Activated CD4-positive, alpha-beta T cell treated with anti-CD3 and anti-CD28 coated beads for 36 hours (primary cell): ENCODE measurements at regions of chr4 and their contacts with region 1.

Region 1: DNA sequence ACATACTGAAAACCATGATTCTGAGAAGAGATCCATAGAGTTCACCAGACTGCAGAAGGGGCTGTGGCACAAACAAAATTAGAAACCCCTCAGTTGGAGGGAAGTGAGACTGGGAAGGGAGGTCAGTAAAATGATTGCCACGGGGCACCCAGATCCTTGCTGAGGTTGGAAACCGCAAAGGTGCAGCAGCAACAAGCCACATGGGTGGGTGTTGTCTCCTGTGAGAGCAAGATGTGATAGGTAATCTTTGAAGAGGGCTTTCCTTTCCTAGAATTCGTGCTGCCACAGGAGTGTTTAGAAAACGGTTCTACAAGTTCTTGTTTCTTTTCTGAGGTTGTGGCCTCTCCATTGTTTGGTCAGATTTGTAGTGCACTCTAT is 85.5 kb downstream of the NFKB1 start:
- DNase-seq: peak; percentile 62
- ATAC-seq: peak; percentile 28
- H3K4me3 Mint-ChIP-seq: no peak overlapping the region
- H3K27ac Mint-ChIP-seq: peak overlapping the region; percentile 79
- H3K4me1 Mint-ChIP-seq: peaks cover 88% of the 10 kb centered on the region
- H3K27me3 Mint-ChIP-seq: no peaks in the 10 kb centered on the region

Region 2: GRCh38 chr4:102554482-102554881 is 32.2 kb before region 1 on chr4:
- CTCF ChIA-PET with region 1: interaction called, 3 read pairs
- POLR2A ChIA-PET with region 1: no interaction called
- intact Hi-C with region 1: loop called in 1 of 2 experiments (anchors 5 kb)
- DNase-seq: no peak
- ATAC-seq: no peak
- H3K4me3 Mint-ChIP-seq: no peak overlapping the region
- H3K27ac Mint-ChIP-seq: no peak overlapping the region
- H3K4me1 Mint-ChIP-seq: peaks cover 58% of the 10 kb centered on the region
- H3K27me3 Mint-ChIP-seq: no peaks in the 10 kb centered on the region

Region 3: GRCh38 chr4:102598086-102598761 is 11.6 kb after region 1 on chr4:
- CTCF ChIA-PET with region 1: interaction called, 4 read pairs
- POLR2A ChIA-PET with region 1: no interaction called
- intact Hi-C with region 1: loop called (anchors 1 kb)
- DNase-seq: no peak
- ATAC-seq: peak; percentile 68
- H3K4me3 Mint-ChIP-seq: peak overlapping the region; percentile 18
- H3K27ac Mint-ChIP-seq: peak overlapping the region; percentile 90
- H3K4me1 Mint-ChIP-seq: peaks cover 70% of the 10 kb centered on the region
- H3K27me3 Mint-ChIP-seq: no peaks in the 10 kb centered on the region

Region 4: DNA sequence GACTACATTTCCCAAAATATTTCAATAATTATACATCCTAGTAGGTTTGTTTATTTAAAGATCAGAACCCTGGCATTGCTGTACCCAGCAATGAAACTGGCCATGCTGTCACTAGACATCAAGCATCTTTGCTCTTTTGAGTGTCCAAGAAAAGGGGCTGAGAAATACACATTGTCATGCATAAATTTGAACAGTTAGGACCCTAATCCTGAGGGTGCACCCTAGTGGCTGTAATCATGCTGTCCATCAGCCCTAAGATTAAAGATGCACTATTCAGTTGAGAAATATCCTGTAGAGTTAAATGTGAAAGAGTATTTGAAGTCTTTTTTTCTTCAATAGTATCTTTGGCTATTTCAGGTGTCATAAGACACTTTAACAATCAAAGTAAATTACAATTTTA is 23.4 kb after region 1 on chr4:
- CTCF ChIA-PET with region 1: interaction called, 4 read pairs
- POLR2A ChIA-PET with region 1: interaction called, 10 read pairs
- intact Hi-C with region 1: no loop called
- DNase-seq: no peak
- ATAC-seq: no peak
- H3K4me3 Mint-ChIP-seq: no peak overlapping the region
- H3K27ac Mint-ChIP-seq: peak overlapping the region; percentile 35
- H3K4me1 Mint-ChIP-seq: peaks cover 77% of the 10 kb centered on the region
- H3K27me3 Mint-ChIP-seq: no peaks in the 10 kb centered on the region

Region 5: GRCh38 chr4:102620697-102621497 is 34.3 kb after region 1 on chr4:
- CTCF ChIA-PET with region 1: no interaction called
- POLR2A ChIA-PET with region 1: no interaction called
- intact Hi-C with region 1: loop called in 1 of 2 experiments (anchors 5 kb)
- DNase-seq: peak; percentile 30
- ATAC-seq: peak; percentile 25
- H3K4me3 Mint-ChIP-seq: no peak overlapping the region
- H3K27ac Mint-ChIP-seq: peak overlapping the region; percentile 47
- H3K4me1 Mint-ChIP-seq: peaks cover 50% of the 10 kb centered on the region
- H3K27me3 Mint-ChIP-seq: no peaks in the 10 kb centered on the region